MCF 10A (cell line): ENCODE measurements at regions of chr1 and their contacts with region 1.

Region 1: GRCh38 chr1:147242439-147243227 is at the start of gene CHD1L:
- DNase-seq: peak; percentile 98
- H3K4me3 Mint-ChIP-seq: peak within 1 kb of the TSS; percentile 70
- H3K27ac Mint-ChIP-seq: peak within 1 kb of the TSS; percentile 71
- H3K4me1 Mint-ChIP-seq: peaks cover 42% of the 10 kb centered on the region
- H3K27me3 Mint-ChIP-seq: no peaks in the 10 kb centered on the region
- CTCF ChIP-seq: peak; percentile 97
- total RNA-seq, gene CHD1L: 73.6 and 81.5 TPM in 2 replicates

Region 2: GRCh38 chr1:147072370-147073061 is 170.1 kb before region 1 on chr1:
- CTCF ChIA-PET with region 1: no interaction called
- POLR2A ChIA-PET with region 1: no interaction called
- intact Hi-C with region 1: no loop called
- DNase-seq: no peak
- H3K4me3 Mint-ChIP-seq: no peak overlapping the region
- H3K27ac Mint-ChIP-seq: no peak overlapping the region
- H3K4me1 Mint-ChIP-seq: no peaks in the 10 kb centered on the region
- H3K27me3 Mint-ChIP-seq: no peaks in the 10 kb centered on the region
- CTCF ChIP-seq: no peak

Region 3: GRCh38 chr1:147099192-147099591 is 143.4 kb before region 1 on chr1:
- CTCF ChIA-PET with region 1: no interaction called
- POLR2A ChIA-PET with region 1: no interaction called
- intact Hi-C with region 1: loop called (anchors 5 kb)
- DNase-seq: no peak
- H3K4me3 Mint-ChIP-seq: no peak overlapping the region
- H3K27ac Mint-ChIP-seq: no peak overlapping the region
- H3K4me1 Mint-ChIP-seq: no peaks in the 10 kb centered on the region
- H3K27me3 Mint-ChIP-seq: no peaks in the 10 kb centered on the region
- CTCF ChIP-seq: no peak

Region 4: GRCh38 chr1:147172168-147172992 is 70.3 kb before region 1 on chr1 and contains the start of gene PRKAB2:
- CTCF ChIA-PET with region 1: interaction called, 131 read pairs
- POLR2A ChIA-PET with region 1: interaction called, 298 read pairs
- intact Hi-C with region 1: loop called (anchors 1 kb)
- DNase-seq: peak; percentile 97
- H3K4me3 Mint-ChIP-seq: peak within 1 kb of the TSS; percentile 95
- H3K27ac Mint-ChIP-seq: peak within 1 kb of the TSS; percentile 98
- H3K4me1 Mint-ChIP-seq: peaks cover 46% of the 10 kb centered on the region
- H3K27me3 Mint-ChIP-seq: no peaks in the 10 kb centered on the region
- CTCF ChIP-seq: peak; percentile 98
- total RNA-seq, gene PRKAB2: 35.1 and 47.6 TPM in 2 replicates

Region 5: DNA sequence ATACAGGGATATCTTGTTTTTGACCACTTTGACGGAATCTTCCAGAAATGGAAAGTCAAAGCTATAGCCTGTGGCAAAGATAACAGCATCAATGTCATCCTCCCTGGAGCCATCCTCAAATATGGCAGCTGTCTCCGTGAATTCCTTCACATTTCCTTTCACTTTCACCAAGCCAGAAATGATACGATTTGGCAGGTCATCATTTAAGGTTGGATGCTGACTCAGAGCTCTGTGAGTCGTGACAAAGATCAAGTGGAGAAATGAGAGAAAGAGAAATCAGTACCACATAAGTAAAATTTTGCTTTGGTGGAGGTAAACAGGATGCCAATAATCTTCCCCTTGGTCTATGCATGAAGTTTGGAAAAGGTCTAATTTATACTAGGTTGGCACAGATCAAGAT is 41.4 kb before region 1 on chr1:
- CTCF ChIA-PET with region 1: interaction called, 6 read pairs
- POLR2A ChIA-PET with region 1: interaction called, 15 read pairs
- intact Hi-C with region 1: no loop called
- DNase-seq: peak; percentile 15
- H3K4me3 Mint-ChIP-seq: no peak overlapping the region
- H3K27ac Mint-ChIP-seq: no peak overlapping the region
- H3K4me1 Mint-ChIP-seq: peaks cover 6% of the 10 kb centered on the region
- H3K27me3 Mint-ChIP-seq: no peaks in the 10 kb centered on the region
- CTCF ChIP-seq: no peak

Region 6: GRCh38 chr1:147264158-147264768 is 21.6 kb after region 1 on chr1:
- CTCF ChIA-PET with region 1: interaction called, 15 read pairs
- POLR2A ChIA-PET with region 1: interaction called, 15 read pairs
- intact Hi-C with region 1: no loop called
- DNase-seq: peak; percentile 79
- H3K4me3 Mint-ChIP-seq: no peak overlapping the region
- H3K27ac Mint-ChIP-seq: peak overlapping the region; percentile 75
- H3K4me1 Mint-ChIP-seq: peaks cover 18% of the 10 kb centered on the region
- H3K27me3 Mint-ChIP-seq: no peaks in the 10 kb centered on the region
- CTCF ChIP-seq: no peak

Region 7: DNA sequence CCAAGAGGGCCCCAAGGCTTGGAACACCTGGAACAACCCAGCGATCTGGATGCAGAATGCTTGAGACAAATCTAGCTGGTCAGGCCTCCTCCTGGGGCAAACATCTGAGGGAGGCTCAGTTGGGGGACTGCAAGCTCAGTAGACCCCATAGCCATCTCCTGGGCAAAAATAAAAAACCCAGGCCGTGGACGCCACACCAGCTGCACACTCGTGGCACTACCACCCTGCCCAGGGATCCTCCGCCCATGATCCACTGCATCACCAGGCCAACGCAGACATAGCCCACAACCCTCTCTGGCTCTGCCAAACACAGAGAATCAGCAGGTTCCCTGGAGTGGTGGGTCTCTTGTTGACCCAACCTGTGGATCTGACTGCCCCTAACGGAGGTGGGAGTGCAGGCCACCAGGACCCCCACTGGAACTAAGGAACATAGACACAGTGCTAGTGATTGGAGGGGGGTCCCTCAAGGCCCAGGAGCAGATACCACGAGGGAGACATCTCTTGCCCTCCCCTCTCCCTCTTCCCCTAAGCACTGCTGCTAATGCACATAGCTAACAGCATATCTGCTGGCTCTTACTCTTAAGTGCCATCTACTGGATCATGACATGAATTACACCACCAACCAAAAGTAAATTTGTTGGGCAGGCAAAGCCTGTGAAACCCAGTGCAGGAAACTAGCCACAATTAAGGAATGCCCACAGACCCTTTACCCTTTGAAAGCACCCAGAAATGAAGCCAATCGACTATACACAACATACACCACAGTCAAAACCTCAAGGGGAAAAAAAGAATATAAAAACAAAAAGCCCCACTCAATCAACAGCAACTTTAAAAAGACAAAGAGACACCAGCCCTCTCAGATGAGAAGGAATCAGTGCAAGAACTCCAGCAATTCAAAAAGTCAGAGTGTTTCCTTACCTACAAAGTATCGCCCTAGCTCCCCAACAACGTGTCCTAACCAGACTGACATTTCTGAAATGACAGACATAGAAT is 147.2 kb after region 1 on chr1:
- CTCF ChIA-PET with region 1: interaction called, 6 read pairs
- POLR2A ChIA-PET with region 1: interaction called, 4 read pairs
- intact Hi-C with region 1: loop called (anchors 1 kb)
- DNase-seq: peak; percentile 67
- H3K4me3 Mint-ChIP-seq: no peak overlapping the region
- H3K27ac Mint-ChIP-seq: no peak overlapping the region
- H3K4me1 Mint-ChIP-seq: no peaks in the 10 kb centered on the region
- H3K27me3 Mint-ChIP-seq: peaks cover 38% of the 10 kb centered on the region
- CTCF ChIP-seq: peak; percentile 91